Activated CD4-positive, alpha-beta memory T cell treated with anti-CD3 and anti-CD28 coated beads, Interleukin-2, amount 10 ng/mL, durations not matched to agents 7 days and 5 days (primary cell): ENCODE measurements at regions of chr15 and their contacts with region 1.

Region 1: DNA sequence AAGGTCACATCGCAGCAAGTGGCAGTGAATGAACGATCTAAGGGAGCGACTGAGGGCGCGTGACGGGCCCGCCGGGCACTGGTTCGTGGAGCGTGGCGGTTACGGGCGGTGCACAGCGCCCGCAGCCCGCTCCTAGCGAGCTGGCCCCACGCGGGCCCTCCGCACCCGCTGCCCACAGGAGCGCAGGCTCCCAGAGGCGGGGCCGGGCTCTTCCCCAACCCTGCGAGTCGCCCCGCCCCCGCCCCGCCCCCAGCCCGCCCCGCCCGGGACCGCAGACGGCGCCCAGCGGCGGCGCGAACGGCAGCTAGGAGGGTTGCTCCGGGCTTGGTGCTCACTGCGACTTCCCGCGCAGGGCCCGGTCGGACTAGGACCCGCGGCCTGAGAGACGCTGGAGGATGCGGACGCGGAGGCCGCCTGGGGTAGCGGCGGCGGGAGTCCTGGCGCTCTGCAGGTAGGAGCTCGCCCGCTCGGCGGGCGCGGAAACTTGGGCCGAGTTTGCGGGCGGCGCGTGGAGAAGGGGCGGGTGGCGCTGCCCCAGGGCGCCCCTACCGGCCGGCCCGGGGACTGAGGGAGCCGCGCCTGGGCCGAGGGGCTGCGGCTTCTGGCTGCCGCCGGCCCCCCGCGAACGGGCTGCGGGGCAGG is at the start of gene C15orf39:
- DNase-seq: peak; percentile 79
- H3K4me3 Mint-ChIP-seq: peak within 1 kb of the TSS; percentile 92
- H3K27ac Mint-ChIP-seq: peak within 1 kb of the TSS; percentile 90
- H3K4me1 Mint-ChIP-seq: peaks cover 57% of the 10 kb centered on the region
- H3K27me3 Mint-ChIP-seq: no peaks in the 10 kb centered on the region
- total RNA-seq, gene C15orf39: 65.0 to 69.2 TPM

Region 2: DNA sequence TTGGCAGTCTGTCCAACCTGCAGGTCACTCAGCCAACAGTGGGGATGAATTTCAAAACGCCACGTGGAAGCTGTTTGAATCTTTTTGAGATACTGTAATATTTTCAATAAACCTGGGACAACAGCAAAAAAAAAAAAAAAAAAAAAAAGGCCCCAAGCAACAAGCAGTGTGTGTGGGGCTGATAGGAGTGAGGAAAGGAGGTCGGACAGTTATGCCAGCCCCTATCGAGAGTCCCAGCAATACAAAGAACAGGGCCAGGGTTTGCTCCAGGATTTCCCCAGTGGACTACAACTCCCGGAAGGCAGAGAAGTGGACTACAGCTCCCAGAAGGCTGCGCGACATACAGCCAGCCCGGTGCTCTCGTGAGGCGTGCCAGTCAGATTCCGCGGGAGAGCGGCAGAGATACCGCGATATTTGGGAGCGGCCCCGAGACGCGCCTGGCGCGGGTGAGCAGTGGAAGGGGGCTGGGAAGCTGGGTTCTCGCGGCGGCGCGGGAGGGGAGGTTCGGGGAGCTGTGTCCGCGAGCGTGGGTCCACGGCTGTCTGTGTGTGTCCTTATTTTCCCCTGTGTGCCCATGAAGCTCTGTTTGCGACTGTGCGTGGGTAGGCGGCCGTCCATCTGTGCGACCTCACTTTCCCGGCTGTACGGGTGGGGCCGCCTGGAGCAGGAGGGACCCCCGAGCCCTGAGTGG is 178.4 kb before region 1 on chr15 and contains the start of gene PPCDC:
- CTCF ChIA-PET with region 1: interaction called, 33 read pairs
- POLR2A ChIA-PET with region 1: interaction called, 47 read pairs
- DNase-seq: peak; percentile 97
- H3K4me3 Mint-ChIP-seq: peak within 1 kb of the TSS; percentile 94
- H3K27ac Mint-ChIP-seq: peak within 1 kb of the TSS; percentile 83
- H3K4me1 Mint-ChIP-seq: peaks cover 18% of the 10 kb centered on the region
- H3K27me3 Mint-ChIP-seq: no peaks in the 10 kb centered on the region
- total RNA-seq, gene PPCDC: 43.0 to 50.2 TPM

Region 3: DNA sequence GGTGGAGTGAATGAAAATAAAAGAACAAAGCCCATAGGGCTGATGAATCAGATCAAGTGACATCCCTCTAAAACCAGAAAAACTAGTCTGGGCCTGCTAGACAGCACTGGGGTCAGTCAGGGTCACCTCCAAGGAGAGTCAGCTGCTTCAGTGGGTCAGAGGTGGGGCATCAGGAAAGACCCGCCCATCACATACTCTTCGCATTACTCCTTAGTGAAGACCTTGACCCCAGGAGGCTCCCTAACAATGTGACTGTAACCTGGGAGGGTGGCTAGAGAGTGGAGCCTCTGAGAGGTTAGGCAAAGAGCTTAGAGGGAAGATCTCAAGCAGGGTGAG is 165.4 kb before region 1 on chr15:
- CTCF ChIA-PET with region 1: interaction called, 53 read pairs
- POLR2A ChIA-PET with region 1: interaction called, 32 read pairs
- DNase-seq: no peak
- H3K4me3 Mint-ChIP-seq: no peak overlapping the region
- H3K27ac Mint-ChIP-seq: no peak overlapping the region
- H3K4me1 Mint-ChIP-seq: peaks cover 59% of the 10 kb centered on the region
- H3K27me3 Mint-ChIP-seq: no peaks in the 10 kb centered on the region

Region 4: GRCh38 chr15:75104804-75105535 is 96.8 kb before region 1 on chr15:
- CTCF ChIA-PET with region 1: interaction called, 16 read pairs
- POLR2A ChIA-PET with region 1: interaction called, 46 read pairs
- DNase-seq: peak; percentile 64
- H3K4me3 Mint-ChIP-seq: peak overlapping the region; percentile 5
- H3K27ac Mint-ChIP-seq: peak overlapping the region; percentile 75
- H3K4me1 Mint-ChIP-seq: peaks cover 42% of the 10 kb centered on the region
- H3K27me3 Mint-ChIP-seq: peaks cover 13% of the 10 kb centered on the region

Region 5: DNA sequence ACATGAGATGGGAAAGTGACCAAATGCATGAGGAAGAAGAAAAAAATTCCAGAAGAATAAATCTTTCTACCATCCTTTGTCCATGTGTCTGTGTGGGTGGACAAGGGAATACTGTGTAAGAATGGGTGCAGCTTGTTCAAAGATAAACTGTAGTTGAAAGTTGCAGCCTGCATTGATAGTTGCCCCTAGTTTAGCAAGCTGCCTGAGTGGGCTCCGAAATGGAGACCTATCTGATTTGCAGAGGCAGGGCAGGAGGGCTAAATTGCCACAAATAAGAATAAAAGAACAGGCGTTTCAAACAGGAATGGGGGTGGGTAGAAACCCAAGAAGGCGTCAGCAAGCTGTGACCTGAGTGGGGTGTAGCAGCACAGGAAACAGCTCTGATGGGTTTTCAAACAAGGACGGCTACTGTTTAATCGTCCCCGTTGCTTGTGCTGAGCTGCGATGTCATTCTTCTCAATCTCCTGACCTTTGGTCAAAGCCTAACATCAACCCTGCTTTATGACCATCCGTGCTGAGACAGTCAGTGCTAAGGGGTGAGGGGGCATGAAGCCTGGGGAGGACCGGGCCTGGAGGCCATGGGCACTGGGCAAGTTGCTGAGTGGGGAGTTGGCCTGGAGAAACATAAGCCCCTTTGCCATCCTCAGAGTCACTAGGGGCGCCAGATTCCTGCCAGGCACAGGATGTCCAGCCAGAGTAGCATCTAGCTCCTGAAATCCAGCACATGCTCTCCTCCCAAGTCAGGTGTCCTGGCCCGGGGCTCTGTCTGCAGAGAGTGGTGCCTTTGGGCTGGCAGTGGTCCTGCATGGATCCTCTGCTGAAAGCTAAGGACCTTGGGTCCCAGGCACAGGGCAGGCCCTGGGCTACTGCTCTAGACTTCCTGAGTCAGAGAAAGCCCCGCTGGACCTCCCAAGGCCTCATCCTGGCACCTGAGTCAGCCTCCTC is 19.3 kb before region 1 on chr15:
- CTCF ChIA-PET with region 1: interaction called, 13 read pairs
- POLR2A ChIA-PET with region 1: interaction called, 6 read pairs
- DNase-seq: no peak
- H3K4me3 Mint-ChIP-seq: no peak overlapping the region
- H3K27ac Mint-ChIP-seq: no peak overlapping the region
- H3K4me1 Mint-ChIP-seq: peaks cover 14% of the 10 kb centered on the region
- H3K27me3 Mint-ChIP-seq: peaks cover 53% of the 10 kb centered on the region

Region 6: GRCh38 chr15:75327005-75327404 is 125.3 kb after region 1 on chr15:
- CTCF ChIA-PET with region 1: no interaction called
- POLR2A ChIA-PET with region 1: no interaction called
- DNase-seq: no peak
- H3K4me3 Mint-ChIP-seq: no peak overlapping the region
- H3K27ac Mint-ChIP-seq: no peak overlapping the region
- H3K4me1 Mint-ChIP-seq: no peaks in the 10 kb centered on the region
- H3K27me3 Mint-ChIP-seq: peaks cover 7% of the 10 kb centered on the region